GM12878 (cell line): ENCODE measurements at regions of chr6 and their contacts with region 1.

Region 1: GRCh38 chr6:158518191-158519127 is 41.4 kb upstream of the TMEM181 start:
- DNase-seq: peak; percentile 71
- ATAC-seq: peak; percentile 89
- H3K4me3 ChIP-seq: peak overlapping the region; percentile 54; the same call in 1 of the 2 replicates
- H3K27ac ChIP-seq: peak overlapping the region; percentile 10
- H3K4me1 ChIP-seq: peaks cover 13% of the 10 kb centered on the region
- H3K27me3 ChIP-seq: no peaks in the 10 kb centered on the region
- CTCF ChIP-seq: peak; percentile 64 to 69 (median 69)
- EP300 ChIP-seq: 0 out of 4 replicates have a peak, but pooled peaks of 1 of the 2 experiments have one; percentile 13
- POLR2A ChIP-seq: no peak
- RAD21 ChIP-seq: peak; percentile 83

Region 2: DNA sequence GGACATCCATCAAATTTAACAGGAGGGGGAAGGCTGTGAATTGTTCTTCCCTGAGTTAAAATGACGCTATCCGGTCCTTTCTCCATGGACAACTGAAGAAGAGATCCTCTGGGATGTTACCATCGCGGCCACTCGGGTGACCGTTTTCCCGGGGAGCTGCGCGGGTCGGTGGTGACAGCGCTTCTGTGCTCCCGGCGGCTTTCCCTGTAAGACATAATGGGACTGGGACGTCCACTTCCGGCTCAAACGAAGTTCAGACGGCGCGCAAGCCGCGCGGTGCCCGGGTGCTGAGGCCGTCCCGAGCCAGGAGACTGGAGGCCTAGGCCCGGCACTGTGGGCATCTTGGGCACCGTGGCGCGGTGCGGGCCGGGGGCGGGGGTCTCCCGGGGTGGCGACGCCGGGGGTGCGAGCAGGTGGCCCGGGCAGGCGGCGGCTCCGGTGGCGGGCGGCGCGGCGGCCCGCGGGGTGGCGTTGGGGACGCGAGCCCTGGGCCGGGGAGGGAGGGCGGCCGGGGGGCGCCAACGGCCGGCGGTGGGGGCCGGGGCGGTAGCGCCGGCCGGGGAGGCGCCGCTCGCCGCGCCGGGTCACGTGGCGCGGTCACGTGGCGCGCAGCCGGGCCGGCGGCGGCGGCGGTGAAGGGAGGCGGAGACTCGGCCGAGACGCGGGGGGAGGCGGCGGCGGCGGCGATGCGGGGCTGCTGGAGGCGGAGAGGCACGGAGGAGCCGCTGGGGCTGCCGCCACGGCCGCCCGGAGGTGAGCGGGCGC is 286.7 kb before region 1 on chr6:
- CTCF ChIA-PET with region 1: interaction called, 7 read pairs
- POLR2A ChIA-PET with region 1: no interaction called
- RAD21 ChIA-PET with region 1: interaction called, 9 read pairs
- SMC1A ChIA-PET with region 1: interaction called, 6 read pairs
- in situ Hi-C with region 1: loop called (anchors 5 kb)
- intact Hi-C with region 1: no loop called
- DNase-seq: no peak
- ATAC-seq: peak; percentile 58
- H3K4me3 ChIP-seq: peak overlapping the region; percentile 84
- H3K27ac ChIP-seq: peak overlapping the region; percentile 68
- H3K4me1 ChIP-seq: peaks cover 11% of the 10 kb centered on the region
- H3K27me3 ChIP-seq: no peaks in the 10 kb centered on the region
- CTCF ChIP-seq: no peak
- EP300 ChIP-seq: no peak
- POLR2A ChIP-seq: peak; percentile 70
- RAD21 ChIP-seq: no peak

Region 3: DNA sequence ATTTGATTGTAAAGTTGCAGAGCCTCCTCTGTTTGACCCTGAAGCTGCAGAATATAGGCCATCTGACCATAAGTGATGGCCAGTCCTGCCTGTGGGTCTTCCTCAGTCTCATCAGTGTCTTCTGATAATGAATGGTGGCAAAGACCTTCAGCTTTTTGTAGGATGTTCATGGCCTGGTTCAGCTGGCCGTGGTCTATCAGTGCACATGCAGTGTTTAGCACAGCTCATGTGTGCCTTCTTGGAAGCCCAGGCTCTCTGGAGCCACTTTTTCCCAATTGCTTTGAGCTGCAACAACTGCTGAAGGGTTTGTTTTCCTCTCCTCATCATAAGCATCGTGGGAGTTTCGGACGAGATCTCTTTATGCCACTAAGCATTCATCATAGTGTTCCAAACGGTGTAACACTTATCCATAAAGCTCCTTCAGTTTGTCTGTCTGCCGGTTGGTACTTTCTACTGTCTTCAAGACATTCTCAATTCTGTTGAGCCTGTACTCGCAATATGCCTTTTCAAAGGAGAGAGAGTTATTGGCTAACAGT is 276.3 kb before region 1 on chr6:
- CTCF ChIA-PET with region 1: interaction called, 10 read pairs
- POLR2A ChIA-PET with region 1: no interaction called
- RAD21 ChIA-PET with region 1: interaction called, 7 read pairs
- SMC1A ChIA-PET with region 1: interaction called, 7 read pairs
- in situ Hi-C with region 1: no loop called
- intact Hi-C with region 1: no loop called
- DNase-seq: no peak
- ATAC-seq: peak; percentile 26
- H3K4me3 ChIP-seq: no peak overlapping the region
- H3K27ac ChIP-seq: peak overlapping the region; percentile 63
- H3K4me1 ChIP-seq: peaks cover 25% of the 10 kb centered on the region
- H3K27me3 ChIP-seq: no peaks in the 10 kb centered on the region
- CTCF ChIP-seq: no peak
- EP300 ChIP-seq: 0 out of 4 replicates have a peak, but pooled peaks of 1 of the 2 experiments have one; percentile 18
- POLR2A ChIP-seq: no peak
- RAD21 ChIP-seq: no peak

Region 4: DNA sequence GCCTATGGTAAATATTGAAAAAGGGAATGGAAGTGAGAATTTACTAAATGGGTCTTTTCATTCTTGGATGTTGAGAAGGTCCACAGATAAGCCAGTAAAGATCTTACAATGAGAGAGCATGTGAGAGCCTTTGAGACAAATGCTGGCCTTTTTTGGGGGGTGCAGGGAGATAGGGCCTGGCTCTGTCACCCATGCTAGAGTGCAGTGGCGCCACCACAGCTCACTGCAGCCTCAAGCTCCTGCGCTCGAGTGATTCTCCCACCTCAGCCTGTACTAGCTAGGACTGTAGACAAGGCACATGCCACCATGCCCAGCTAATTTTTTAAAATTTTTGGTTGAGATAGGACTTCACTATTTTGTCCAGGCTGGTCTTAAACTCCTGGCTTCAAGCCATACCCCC is 21.8 kb before region 1 on chr6:
- CTCF ChIA-PET with region 1: interaction called, 12 read pairs
- POLR2A ChIA-PET with region 1: no interaction called
- RAD21 ChIA-PET with region 1: no interaction called
- SMC1A ChIA-PET with region 1: interaction called, 8 read pairs
- in situ Hi-C with region 1: no loop called
- intact Hi-C with region 1: no loop called
- DNase-seq: no peak
- ATAC-seq: peak; percentile 51; the same call in 1 of the 3 replicates
- H3K4me3 ChIP-seq: no peak overlapping the region
- H3K27ac ChIP-seq: no peak overlapping the region
- H3K4me1 ChIP-seq: no peaks in the 10 kb centered on the region
- H3K27me3 ChIP-seq: no peaks in the 10 kb centered on the region
- CTCF ChIP-seq: peak in 2 of 3 experiments; percentile 8 to 12; a peak in 1 of 6 replicates
- EP300 ChIP-seq: no peak
- POLR2A ChIP-seq: no peak
- RAD21 ChIP-seq: peak; percentile 26; the same call in 1 of the 2 replicates

Region 5: DNA sequence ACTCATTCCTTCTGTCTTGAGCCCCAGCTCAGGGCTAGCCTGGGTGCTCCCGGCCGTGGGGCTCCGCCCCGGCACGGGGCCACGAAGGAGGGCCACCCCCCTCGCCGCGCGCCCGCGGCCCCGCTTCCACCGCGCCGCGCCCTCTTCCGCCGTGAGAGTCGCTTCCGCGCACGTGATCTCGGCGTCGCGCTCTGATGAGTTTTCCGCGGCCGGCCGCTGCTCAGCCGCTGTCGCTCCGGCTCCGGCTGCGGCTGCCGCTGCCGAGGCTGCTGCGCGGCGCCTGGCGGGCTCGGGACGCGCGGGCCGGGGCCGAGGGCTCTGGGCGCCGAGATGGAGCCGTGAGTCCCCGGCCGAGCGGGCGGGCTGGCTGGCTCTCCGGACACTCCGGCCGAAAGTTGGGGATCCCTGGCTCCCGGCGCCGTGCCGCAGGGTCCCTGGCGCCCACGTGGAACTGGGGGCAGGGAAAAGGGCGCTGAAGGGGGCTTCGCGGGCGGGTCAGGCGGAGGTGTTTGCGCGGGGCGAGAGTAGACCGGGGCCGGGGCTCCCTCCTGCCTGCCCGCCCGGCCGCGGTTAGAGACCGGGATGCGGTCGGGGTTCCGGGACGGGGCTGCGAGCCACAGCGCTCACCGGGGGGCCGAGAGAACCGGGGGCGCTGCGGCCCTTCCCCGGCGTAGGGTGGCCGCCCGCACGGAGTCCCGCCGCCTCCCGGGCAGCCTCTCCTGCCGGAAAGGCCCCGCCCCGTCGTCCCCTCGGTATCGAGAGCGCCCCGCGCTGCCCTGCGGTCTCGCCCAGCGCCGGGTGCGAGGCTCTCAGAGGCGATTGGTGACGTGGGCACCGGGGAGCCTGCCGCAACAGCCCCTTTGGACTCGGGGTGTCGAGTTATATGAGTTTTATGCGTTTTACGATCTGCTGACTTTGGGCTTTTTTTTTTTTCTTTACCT is 41.7 kb after region 1 on chr6 and contains the start of gene TMEM181:
- CTCF ChIA-PET with region 1: interaction called, 9 read pairs
- POLR2A ChIA-PET with region 1: no interaction called
- RAD21 ChIA-PET with region 1: interaction called, 6 read pairs
- SMC1A ChIA-PET with region 1: interaction called, 7 read pairs
- in situ Hi-C with region 1: no loop called
- intact Hi-C with region 1: loop called (anchors 5 kb)
- DNase-seq: peak; percentile 32
- ATAC-seq: peak; percentile 89
- H3K4me3 ChIP-seq: peak within 1 kb of the TSS; percentile 79
- H3K27ac ChIP-seq: peak within 1 kb of the TSS; percentile 69
- H3K4me1 ChIP-seq: peaks cover 12% of the 10 kb centered on the region
- H3K27me3 ChIP-seq: no peaks in the 10 kb centered on the region
- CTCF ChIP-seq: no peak
- EP300 ChIP-seq: no peak
- POLR2A ChIP-seq: peak; percentile 88
- RAD21 ChIP-seq: no peak
- polyA plus RNA-seq, gene TMEM181: 1.5 to 2.3 TPM

Region 6: GRCh38 chr6:158605266-158605878 is 86.9 kb after region 1 on chr6:
- CTCF ChIA-PET with region 1: interaction called, 14 read pairs
- POLR2A ChIA-PET with region 1: no interaction called
- RAD21 ChIA-PET with region 1: interaction called, 15 read pairs
- SMC1A ChIA-PET with region 1: interaction called, 4 read pairs
- in situ Hi-C with region 1: no loop called
- intact Hi-C with region 1: no loop called
- DNase-seq: peak; percentile 36
- ATAC-seq: peak; percentile 90
- H3K4me3 ChIP-seq: no peak overlapping the region
- H3K27ac ChIP-seq: no peak overlapping the region
- H3K4me1 ChIP-seq: no peaks in the 10 kb centered on the region
- H3K27me3 ChIP-seq: no peaks in the 10 kb centered on the region
- CTCF ChIP-seq: peak; percentile 68 to 84 (median 74); a peak in 5 of 6 replicates
- EP300 ChIP-seq: no peak
- POLR2A ChIP-seq: no peak
- RAD21 ChIP-seq: peak; percentile 72